PC-3 (cell line): ENCODE measurements at regions of chr3 and their contacts with region 1.

Region 1: DNA sequence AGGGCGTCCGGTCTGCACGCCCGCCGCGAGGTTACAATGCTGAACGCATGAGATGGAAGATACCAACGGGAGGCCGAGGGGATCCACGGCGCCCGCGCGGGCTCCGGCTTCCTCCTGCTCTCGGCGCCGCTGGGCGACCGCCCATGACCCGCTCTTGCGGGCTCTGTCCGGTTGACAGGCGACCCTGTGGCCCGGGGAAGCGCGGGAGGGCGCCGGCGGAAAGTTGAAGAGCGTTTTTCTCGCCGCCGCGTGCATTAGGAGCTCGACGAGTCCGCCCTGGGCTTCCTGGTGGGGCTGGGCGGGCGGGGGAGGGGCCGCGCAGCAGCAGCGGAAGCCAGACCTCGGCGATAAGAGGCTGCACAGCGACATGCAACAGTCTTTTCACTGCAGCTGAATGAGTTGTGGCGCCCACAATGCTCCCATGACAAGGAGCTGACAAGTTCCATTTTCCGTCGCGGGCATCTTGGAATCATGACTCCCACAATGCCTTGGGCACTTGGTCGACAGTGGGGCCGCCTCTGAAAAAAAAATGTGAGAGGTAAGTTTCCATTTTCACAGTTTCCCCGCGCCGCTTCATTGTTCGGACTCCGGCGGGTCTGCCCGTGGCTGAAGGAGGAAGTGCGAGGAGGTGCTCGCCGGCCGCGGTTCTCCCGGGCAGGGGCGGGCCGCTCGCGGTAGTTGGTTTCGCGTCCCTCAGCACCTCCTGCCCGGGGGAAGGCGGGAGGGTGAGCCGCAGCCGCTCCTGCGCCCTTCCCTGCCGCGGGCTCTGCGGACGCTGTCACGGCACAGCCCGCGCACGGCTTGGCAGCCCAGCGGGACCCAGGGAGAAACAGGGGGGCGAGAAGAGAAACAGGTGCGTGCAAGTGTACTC is at the start of gene MBNL1:
- DNase-seq: peak; percentile 79
- ATAC-seq: peak; percentile 60
- H3K4me3 ChIP-seq: peak within 1 kb of the TSS; percentile 81
- H3K27ac ChIP-seq: peak within 1 kb of the TSS; percentile 94
- H3K4me1 ChIP-seq: peaks cover 48% of the 10 kb centered on the region
- H3K27me3 ChIP-seq: no peaks in the 10 kb centered on the region
- CTCF ChIP-seq: no peak
- total RNA-seq, gene MBNL1: 150 and 161 TPM in 2 replicates

Region 2: DNA sequence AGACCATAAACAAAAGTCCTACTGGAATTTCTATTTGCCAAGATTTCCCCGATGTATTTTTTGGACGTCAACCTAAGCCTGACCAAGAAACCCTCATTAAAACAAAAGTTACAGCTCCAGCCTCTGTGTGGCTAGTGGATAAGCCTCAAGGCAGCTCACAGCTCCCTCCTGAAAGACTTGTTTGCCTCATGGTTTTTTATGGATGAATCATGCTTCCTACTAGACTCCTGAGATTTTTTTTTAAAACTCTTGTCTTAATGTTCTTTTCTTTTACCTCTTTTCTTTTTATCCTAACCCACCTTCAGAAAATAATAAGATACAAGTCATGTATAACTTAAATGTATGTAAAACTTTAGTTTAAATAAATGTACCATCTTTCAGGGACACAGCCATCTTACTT is 342.9 kb before region 1 on chr3:
- CTCF ChIA-PET with region 1: no interaction called
- POLR2A ChIA-PET with region 1: interaction called, 6 read pairs
- intact Hi-C with region 1: loop called (anchors 5 kb)
- DNase-seq: peak; percentile 89
- ATAC-seq: peak; percentile 89
- H3K4me3 ChIP-seq: peak overlapping the region; percentile 57; the same call in 1 of the 2 replicates
- H3K27ac ChIP-seq: peak overlapping the region; percentile 92
- H3K4me1 ChIP-seq: peaks cover 47% of the 10 kb centered on the region
- H3K27me3 ChIP-seq: no peaks in the 10 kb centered on the region
- CTCF ChIP-seq: no peak

Region 3: DNA sequence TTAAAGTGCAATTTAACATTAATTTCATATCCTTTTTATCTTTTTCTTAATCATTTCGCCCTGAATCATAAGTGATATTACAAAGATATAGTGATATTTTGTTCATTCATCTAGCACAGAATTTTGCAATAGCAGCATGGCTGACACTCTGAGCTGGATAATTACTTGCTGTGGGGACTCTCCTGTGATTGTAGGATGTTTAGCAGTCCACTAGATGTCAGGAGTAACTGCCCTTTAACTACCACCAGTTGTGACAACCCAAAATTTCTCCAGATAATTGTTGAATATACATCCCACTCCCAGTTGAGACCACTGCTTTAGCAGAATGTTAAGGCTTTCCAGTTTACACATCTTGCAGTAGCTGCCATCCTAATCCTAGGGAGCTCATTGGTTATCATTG is 196.9 kb before region 1 on chr3:
- CTCF ChIA-PET with region 1: no interaction called
- POLR2A ChIA-PET with region 1: no interaction called
- intact Hi-C with region 1: loop called (anchors 2 kb)
- DNase-seq: peak; percentile 64
- ATAC-seq: peak; percentile 65
- H3K4me3 ChIP-seq: no peak overlapping the region
- H3K27ac ChIP-seq: no peak overlapping the region
- H3K4me1 ChIP-seq: peaks cover 5% of the 10 kb centered on the region; the same call in 1 of the 2 replicates
- H3K27me3 ChIP-seq: no peaks in the 10 kb centered on the region
- CTCF ChIP-seq: peak; percentile 83

Region 4: GRCh38 chr3:152177757-152178156 is 91.0 kb before region 1 on chr3:
- CTCF ChIA-PET with region 1: no interaction called
- POLR2A ChIA-PET with region 1: no interaction called
- intact Hi-C with region 1: loop called (anchors 2 kb)
- DNase-seq: no peak
- ATAC-seq: no peak
- H3K4me3 ChIP-seq: no peak overlapping the region
- H3K27ac ChIP-seq: no peak overlapping the region
- H3K4me1 ChIP-seq: peaks cover 28% of the 10 kb centered on the region
- H3K27me3 ChIP-seq: no peaks in the 10 kb centered on the region
- CTCF ChIP-seq: no peak

Region 5: DNA sequence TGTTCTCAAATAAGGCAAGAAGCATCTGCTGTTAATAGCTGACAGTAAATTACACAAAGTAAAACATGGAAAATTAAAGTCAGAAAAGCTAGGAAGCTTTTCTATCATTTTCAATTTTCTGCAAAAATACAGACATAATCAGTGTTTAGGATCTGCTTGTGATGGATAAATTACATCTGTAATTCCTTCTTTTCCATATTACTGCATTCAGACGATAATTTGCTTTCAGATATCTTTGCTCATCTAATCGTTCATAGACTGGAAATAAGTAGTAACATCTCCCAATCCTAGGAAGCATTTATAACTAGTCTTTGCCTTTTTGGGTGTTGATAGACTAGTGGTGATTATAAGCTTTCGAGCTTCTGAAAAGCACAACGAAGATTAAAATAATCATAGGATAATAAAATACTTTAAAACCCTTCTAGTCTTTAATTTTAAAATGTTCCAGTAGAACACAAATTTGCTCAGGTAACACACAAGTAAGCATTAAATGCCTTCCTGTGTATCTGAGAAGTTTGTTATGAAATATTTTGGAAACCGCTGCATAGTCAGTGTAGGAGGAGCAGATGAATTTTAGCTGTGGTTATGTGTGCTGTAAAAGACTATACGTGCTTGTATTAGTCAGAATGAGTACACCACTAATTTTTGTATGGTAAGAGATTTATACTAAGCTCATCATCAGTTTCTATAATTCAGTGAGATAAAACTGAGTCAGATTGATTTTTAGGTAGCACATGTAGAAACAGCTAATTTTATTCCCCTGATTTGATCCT is 40.9 kb after region 1 on chr3:
- CTCF ChIA-PET with region 1: no interaction called
- POLR2A ChIA-PET with region 1: interaction called, 6 read pairs
- intact Hi-C with region 1: loop called (anchors 2 kb)
- DNase-seq: peak; percentile 81
- ATAC-seq: peak; percentile 46
- H3K4me3 ChIP-seq: no peak overlapping the region
- H3K27ac ChIP-seq: peak overlapping the region; percentile 97
- H3K4me1 ChIP-seq: peaks cover 59% of the 10 kb centered on the region
- H3K27me3 ChIP-seq: no peaks in the 10 kb centered on the region
- CTCF ChIP-seq: no peak

Region 6: DNA sequence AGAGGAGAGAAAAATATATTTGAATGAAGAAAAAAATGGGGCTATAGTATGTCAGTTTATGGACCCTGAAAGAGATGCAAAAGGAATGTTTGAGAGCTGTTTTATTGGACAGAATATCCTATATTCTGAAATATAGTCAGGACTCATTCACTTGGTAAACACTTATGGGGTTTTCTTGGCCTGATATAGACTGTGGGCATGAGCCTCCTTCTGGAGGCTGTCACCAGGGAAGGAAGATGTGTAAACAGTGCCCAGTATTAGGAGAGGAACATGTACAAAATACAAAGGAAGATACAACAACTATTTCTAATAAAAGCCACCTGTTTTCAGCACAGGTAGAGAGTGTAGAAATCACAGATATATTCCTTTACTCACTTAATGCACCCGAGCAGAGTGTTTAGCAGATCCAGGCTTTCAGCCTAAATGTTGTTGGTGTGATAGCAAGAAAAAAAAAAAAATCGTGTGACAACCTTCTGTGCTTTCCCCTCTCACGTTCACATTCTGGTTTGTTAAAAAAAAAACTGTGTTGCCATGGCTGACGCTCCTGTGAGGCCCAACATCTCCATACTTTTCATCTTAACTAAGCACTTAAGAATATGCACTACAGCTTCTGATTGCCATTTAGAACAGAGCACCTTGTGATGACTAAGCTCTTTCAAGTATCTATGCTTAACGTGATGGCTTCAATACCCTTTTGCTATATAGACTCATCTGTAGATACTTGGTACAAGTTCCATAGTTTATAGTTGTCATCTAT is 134.1 kb after region 1 on chr3:
- CTCF ChIA-PET with region 1: no interaction called
- POLR2A ChIA-PET with region 1: interaction called, 8 read pairs
- intact Hi-C with region 1: loop called (anchors 5 kb)
- DNase-seq: peak; percentile 31
- ATAC-seq: peak; percentile 62
- H3K4me3 ChIP-seq: no peak overlapping the region
- H3K27ac ChIP-seq: 0 out of 2 replicates have a peak overlapping the region, but pooled peaks have one; percentile 17
- H3K4me1 ChIP-seq: peaks cover 59% of the 10 kb centered on the region
- H3K27me3 ChIP-seq: no peaks in the 10 kb centered on the region
- CTCF ChIP-seq: no peak